Dendritic cell treated with granulocyte-macrophage colony-stimulating factor and Interleukin-4, amounts not matched to agents 40 ng/mL and 50 ng/mL, for 4 days (primary cell): ENCODE measurements at regions of chr18 and their contacts with region 1.

Region 1: GRCh38 chr18:13159579-13159978 is 59.0 kb upstream of the LDLRAD4 start:
- H3K4me3 Mint-ChIP-seq: no peak overlapping the region
- H3K27ac Mint-ChIP-seq: no peak overlapping the region
- H3K4me1 Mint-ChIP-seq: no peaks in the 10 kb centered on the region
- H3K27me3 Mint-ChIP-seq: peaks cover 2% of the 10 kb centered on the region

Region 2: GRCh38 chr18:13003466-13003896 is 156.1 kb before region 1 on chr18:
- intact Hi-C with region 1: loop called (anchors 2 kb)
- H3K4me3 Mint-ChIP-seq: no peak overlapping the region
- H3K27ac Mint-ChIP-seq: no peak overlapping the region
- H3K4me1 Mint-ChIP-seq: peaks cover 3% of the 10 kb centered on the region
- H3K27me3 Mint-ChIP-seq: no peaks in the 10 kb centered on the region

Region 3: DNA sequence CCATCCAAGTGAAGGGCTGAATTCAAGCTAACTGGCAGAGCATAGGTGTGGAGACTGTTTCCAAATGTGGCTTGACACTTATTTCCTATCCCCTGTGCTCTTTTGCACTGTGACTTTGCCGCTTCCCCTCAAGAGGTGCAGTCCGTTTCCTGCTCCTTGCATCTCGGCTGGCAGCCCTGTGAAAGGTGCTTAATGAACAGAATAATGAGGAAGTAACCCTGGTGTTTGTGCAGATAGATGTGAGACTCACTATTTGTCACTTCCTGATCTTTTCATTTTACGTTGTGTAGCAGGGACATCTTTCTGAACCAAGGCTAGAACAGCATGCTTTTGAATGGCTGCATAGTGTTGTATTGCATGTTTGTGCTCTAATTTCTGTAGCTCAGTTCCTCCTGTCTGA is 107.6 kb before region 1 on chr18:
- intact Hi-C with region 1: no loop called
- H3K4me3 Mint-ChIP-seq: no peak overlapping the region
- H3K27ac Mint-ChIP-seq: no peak overlapping the region
- H3K4me1 Mint-ChIP-seq: peaks cover 25% of the 10 kb centered on the region
- H3K27me3 Mint-ChIP-seq: no peaks in the 10 kb centered on the region

Region 4: GRCh38 chr18:13112982-13113381 is 46.6 kb before region 1 on chr18:
- intact Hi-C with region 1: loop called (anchors 1 kb)
- H3K4me3 Mint-ChIP-seq: no peak overlapping the region
- H3K27ac Mint-ChIP-seq: no peak overlapping the region
- H3K4me1 Mint-ChIP-seq: no peaks in the 10 kb centered on the region
- H3K27me3 Mint-ChIP-seq: no peaks in the 10 kb centered on the region

Region 5: DNA sequence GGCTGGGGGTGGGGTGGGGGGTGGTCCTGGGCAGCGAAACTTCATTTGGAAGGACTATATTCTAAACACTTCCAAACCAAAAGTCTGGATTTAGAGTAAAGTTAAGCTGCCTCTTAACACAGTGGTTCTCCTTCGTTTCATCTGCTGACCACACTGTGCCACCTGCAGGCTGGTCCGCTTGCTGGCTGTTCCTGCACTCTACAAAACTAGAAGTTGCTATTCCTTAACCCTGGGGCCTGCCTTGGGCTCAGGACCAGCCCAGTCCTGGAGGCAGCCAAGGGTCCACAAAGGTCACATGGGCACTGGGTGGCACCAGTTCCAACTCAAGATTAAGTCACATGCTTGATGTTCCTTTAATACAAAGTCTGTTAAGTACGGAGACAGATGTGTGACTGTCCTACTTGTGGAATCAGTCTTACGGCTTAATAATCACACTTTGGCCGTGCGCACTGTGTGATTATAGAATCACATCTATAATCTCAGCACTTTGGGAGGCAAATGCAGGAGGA is 371.4 kb after region 1 on chr18:
- intact Hi-C with region 1: no loop called
- H3K4me3 Mint-ChIP-seq: no peak overlapping the region
- H3K27ac Mint-ChIP-seq: no peak overlapping the region
- H3K4me1 Mint-ChIP-seq: peaks cover 17% of the 10 kb centered on the region
- H3K27me3 Mint-ChIP-seq: no peaks in the 10 kb centered on the region